ENCODE measurements at regions of chr1 and their contacts with region 1.

Region 1: DNA sequence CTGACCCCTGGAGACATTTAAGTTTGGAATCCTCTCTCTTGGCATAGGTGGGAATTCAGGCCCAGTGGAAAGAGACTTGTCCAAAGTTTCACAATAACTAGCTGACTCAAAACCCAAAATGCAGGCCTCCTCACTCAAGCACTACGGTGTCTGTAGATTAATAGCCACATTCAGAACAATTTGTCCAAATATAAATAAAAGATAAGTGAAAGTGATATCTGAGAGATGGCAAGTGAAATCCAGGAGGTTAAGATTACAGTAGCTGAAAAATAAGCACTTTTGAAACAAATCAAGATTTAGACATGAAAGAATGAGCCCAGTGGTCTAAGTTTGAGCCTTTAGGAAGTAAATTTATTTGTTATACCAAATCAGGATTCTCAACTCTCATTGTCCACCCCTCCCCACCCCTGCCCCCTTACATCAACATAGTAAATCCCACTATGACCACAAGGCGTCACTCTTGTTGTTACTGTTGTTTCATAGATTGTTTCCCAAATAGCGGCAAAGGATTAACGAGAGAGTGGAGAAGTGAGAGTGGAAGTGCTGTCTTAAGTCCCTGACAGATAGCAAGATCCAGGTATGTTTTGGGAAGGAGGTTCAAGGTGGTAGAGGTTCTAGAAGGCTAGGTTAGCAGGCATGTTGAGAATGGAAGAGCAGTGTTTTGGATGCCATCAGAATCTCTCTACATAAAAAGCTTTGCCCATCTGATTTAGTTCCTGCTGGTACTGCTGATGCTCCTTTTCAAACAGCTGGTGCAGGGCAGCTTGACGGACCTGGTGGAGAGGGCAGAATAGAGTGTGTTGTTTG is 7.1 kb upstream of the TPM3 start:
- DNase-seq: peak; percentile 73 to 77 (median 76)
- ATAC-seq: peak; percentile 87
- H3K4me3 ChIP-seq: no peak overlapping the region
- H3K27ac ChIP-seq: no peak overlapping the region
- H3K4me1 ChIP-seq: peaks cover 5 to 8% of the 10 kb centered on the region in 2 experiments; a peak in 4 of 5 replicates
- H3K27me3 ChIP-seq: no peaks in the 10 kb centered on the region
- CTCF ChIP-seq: peak; percentile 57 to 73 (median 73)
- EP300 ChIP-seq: no peak
- POLR2A ChIP-seq: no peak
- RAD21 ChIP-seq: peak; percentile 64 to 66

Region 2: GRCh38 chr1:154272217-154272998 is 73.4 kb after region 1 on chr1 and contains the start of gene HAX1:
- CTCF ChIA-PET with region 1: interaction called, 14 read pairs
- POLR2A ChIA-PET with region 1: interaction called, 4 read pairs
- in situ Hi-C with region 1: no loop called
- intact Hi-C with region 1: loop called (anchors 1 kb)
- DNase-seq: peak; percentile 91 to 98 (median 92)
- ATAC-seq: peak; percentile 95
- H3K4me3 ChIP-seq: peak within 1 kb of the TSS; percentile 88
- H3K27ac ChIP-seq: peak within 1 kb of the TSS; percentile 79
- H3K4me1 ChIP-seq: peaks cover 3 to 5% of the 10 kb centered on the region in 2 experiments; a peak in 4 of 5 replicates
- H3K27me3 ChIP-seq: no peaks in the 10 kb centered on the region; a peak in 1 of 5 replicates
- CTCF ChIP-seq: peak; percentile 85 to 97 (median 93)
- EP300 ChIP-seq: peak; percentile 58
- POLR2A ChIP-seq: peak; percentile 89
- RAD21 ChIP-seq: peak; percentile 91 to 97
- polyA plus RNA-seq, gene HAX1: 447 to 492 TPM

Region 3: GRCh38 chr1:154353460-154353904 is 154.5 kb after region 1 on chr1:
- CTCF ChIA-PET with region 1: no interaction called
- POLR2A ChIA-PET with region 1: no interaction called
- in situ Hi-C with region 1: no loop called
- intact Hi-C with region 1: no loop called
- DNase-seq: peak; percentile 46 to 81 (median 74)
- ATAC-seq: peak; percentile 71
- H3K4me3 ChIP-seq: no peak overlapping the region
- H3K27ac ChIP-seq: no peak overlapping the region
- H3K4me1 ChIP-seq: peaks cover 31 to 42% of the 10 kb centered on the region in 2 experiments
- H3K27me3 ChIP-seq: no peaks in the 10 kb centered on the region
- CTCF ChIP-seq: peak; percentile 52 to 68 (median 52)
- EP300 ChIP-seq: peak; percentile 65
- POLR2A ChIP-seq: no peak
- RAD21 ChIP-seq: peak in 1 of 2 experiments; percentile 55; a peak in 3 of 4 replicates